Stomach (tissue), 19 donors: ENCODE measurements at regions of chr15 and their contacts with region 1.

Region 1: DNA sequence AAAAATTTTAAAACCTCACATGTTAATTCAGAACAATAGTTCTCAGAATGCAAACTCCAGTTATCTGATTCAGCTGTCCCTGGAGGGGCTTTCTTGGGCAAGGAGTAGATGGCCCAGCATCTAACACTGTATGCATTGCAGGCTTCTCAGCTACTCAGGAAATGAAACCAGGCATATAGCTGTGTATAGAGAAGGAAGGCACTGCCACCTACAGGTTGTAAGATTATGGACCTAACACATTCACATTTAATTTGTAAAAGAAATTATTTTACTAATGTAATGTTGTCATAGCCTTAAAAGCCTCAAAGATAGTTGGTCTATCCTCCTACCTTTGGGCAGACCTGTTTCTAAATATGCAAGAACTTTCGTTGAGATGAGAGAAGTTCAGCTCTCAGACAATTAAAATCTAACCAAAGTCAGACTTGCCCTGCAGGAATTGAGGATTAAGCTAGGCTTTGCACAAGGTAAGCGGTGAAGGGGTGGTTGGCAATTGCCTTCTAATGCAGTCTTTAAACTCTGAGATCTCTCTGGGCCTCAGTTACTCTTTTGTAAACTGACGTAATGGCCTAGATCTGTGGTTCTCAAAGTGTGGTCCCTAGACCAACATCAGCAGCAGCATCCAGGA is 132.8 kb upstream of the SLC24A5 start:
- DNase-seq: peak in 1 of 2 donors; percentile 88
- H3K4me3 ChIP-seq: no peak overlapping the region
- H3K27ac ChIP-seq: no peak overlapping the region
- H3K4me1 ChIP-seq: no peaks in the 10 kb centered on the region
- H3K27me3 ChIP-seq: no peaks in the 10 kb centered on the region
- CTCF ChIP-seq: peak in 5 of 7 experiments; percentile 32 to 65 (median 55)
- EP300 ChIP-seq: no peak
- POLR2A ChIP-seq: no peak

Region 2: DNA sequence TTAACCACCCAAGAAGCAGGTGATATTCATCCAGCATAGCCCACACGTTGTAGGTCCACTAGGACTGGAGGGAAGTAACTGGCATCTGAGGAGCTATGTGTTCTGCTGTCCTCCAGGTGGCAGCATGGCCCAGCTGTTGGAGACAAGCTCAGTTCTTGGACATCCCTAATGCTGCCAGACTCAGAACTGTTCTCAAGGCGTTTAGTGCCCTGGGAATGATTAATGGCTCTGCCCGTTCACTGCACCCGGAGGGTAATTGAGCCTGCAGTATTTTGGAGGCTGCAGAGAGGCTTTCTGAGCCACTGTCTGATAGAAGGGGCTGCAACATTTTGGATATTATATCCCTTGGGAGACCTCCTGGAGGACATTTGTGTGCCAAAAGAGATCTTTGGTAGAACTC is 792.0 kb before region 1 on chr15:
- intact Hi-C with region 1: loop called (anchors 5 kb)
- DNase-seq: peak; percentile 72 to 96
- H3K4me3 ChIP-seq: no peak overlapping the region
- H3K27ac ChIP-seq: no peak overlapping the region
- H3K4me1 ChIP-seq: peaks cover 0 to 4% (median 0%) of the 10 kb centered on the region in 4 donors
- H3K27me3 ChIP-seq: no peaks in the 10 kb centered on the region
- CTCF ChIP-seq: peak in 5 of 7 experiments; percentile 61 to 77 (median 74)
- EP300 ChIP-seq: no peak
- POLR2A ChIP-seq: no peak